ENCODE measurements at regions of chr15 and their contacts with region 1.

Region 1: DNA sequence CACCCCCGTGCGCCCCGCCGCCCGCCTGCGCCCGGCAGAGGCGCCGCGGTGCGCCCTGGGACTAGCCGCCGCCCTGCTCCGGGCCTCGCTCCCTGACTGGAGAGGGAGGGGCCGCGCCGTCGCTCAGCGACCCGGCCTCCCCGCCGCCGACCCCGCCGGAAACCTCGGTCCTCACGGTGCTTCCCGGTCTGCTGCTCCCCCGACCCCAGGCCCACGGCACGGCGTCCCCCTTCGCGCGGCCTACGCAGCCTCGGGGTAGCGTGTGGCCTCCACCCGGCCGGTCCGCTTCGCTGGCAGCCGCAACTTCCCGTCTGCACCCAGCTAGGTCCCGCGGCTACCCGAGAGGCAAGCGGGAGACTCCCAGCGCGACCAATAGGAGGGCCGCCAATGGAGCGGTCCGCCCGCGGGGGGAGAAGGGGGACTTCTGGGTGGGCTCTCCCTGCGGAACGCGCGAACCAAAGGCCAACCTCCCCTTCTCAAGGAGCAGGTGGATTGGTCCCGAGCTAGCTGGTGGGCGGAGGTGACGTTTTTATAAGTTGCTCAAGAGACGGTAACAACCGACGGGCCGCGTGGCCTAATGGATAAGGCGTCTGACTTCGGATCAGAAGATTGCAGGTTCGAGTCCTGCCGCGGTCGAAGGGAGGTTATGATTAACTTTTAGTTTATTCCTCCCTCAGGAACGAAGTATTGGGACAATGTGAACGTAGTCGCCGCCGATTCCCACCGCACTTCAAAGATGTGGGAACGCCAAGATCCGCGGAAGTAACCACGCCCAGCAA is at the start of gene POLG:
- DNase-seq: peak; percentile 98 to 99
- H3K4me3 ChIP-seq: peak within 1 kb of the TSS; percentile 79 to 93 (median 86)
- H3K27ac ChIP-seq: peak within 1 kb of the TSS; percentile 85
- H3K4me1 ChIP-seq: peaks cover 0 to 16% (median 3%) of the 10 kb centered on the region in 4 experiments; a peak in 4 of 7 replicates
- H3K27me3 ChIP-seq: no peaks in the 10 kb centered on the region; a peak in 1 of 7 replicates
- CTCF ChIP-seq: no peak
- EP300 ChIP-seq: peak in 1 of 2 experiments; percentile 100; a peak in 2 of 3 replicates
- POLR2A ChIP-seq: peak in 1 of 2 experiments; percentile 94; a peak in 2 of 3 replicates
- RAD21 ChIP-seq: no peak
- total RNA-seq, gene POLG: 52.3 and 53.4 TPM in 2 replicates

Region 2: GRCh38 chr15:89321521-89322410 is 12.9 kb before region 1 on chr15:
- CTCF ChIA-PET with region 1: interaction called, 54 read pairs
- POLR2A ChIA-PET with region 1: interaction called, 250 read pairs
- DNase-seq: no peak
- H3K4me3 ChIP-seq: no peak overlapping the region
- H3K27ac ChIP-seq: no peak overlapping the region
- H3K4me1 ChIP-seq: no peaks in the 10 kb centered on the region
- H3K27me3 ChIP-seq: no peaks in the 10 kb centered on the region
- CTCF ChIP-seq: peak in 2 of 3 experiments; percentile 26 to 44; a peak in 3 of 4 replicates
- EP300 ChIP-seq: no peak
- POLR2A ChIP-seq: no peak
- RAD21 ChIP-seq: peak in 1 of 2 experiments; percentile 23; a peak in 1 of 4 replicates

Region 3: DNA sequence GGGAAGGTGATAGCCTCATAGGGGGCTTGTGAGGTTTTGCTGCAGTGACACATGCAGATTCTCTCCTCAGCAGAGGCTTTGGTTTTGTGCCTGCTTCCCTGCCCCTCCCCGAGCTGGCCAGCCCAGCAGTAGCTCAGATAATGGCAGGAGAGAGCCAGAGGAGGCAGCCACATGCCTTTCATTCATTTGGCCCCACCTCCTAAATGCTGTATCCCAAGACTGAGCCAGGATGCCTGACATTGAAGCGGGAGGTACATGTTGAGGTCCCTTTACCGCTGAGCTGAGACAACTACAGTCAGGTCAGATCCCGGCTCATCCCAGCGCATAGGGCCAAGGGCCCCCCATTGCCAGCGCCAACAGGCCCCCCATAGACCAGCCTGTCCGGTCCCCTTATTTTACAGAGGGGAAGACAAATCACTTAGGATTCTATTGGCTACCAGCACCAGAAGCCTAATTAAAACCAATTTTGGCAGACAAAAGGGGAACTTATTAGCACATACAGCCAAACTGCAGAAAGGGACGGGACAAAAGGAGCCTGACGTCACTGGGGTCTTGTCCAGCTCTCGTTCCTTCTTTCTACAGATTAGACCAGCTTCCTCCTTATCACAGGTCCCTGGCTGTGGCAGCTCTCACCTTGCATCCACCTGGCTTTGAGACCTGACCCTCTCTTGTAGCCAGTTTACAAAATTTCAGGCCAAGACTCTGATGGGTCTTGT is 12.0 kb after region 1 on chr15:
- CTCF ChIA-PET with region 1: interaction called, 14 read pairs
- POLR2A ChIA-PET with region 1: interaction called, 8 read pairs
- DNase-seq: peak in 1 of 2 experiments; percentile 58
- H3K4me3 ChIP-seq: no peak overlapping the region
- H3K27ac ChIP-seq: no peak overlapping the region
- H3K4me1 ChIP-seq: peaks cover 0 to 10% (median 6%) of the 10 kb centered on the region in 4 experiments; a peak in 5 of 7 replicates
- H3K27me3 ChIP-seq: peaks cover 0 to 2% (median 0%) of the 10 kb centered on the region in 4 experiments; a peak in 1 of 7 replicates
- CTCF ChIP-seq: no peak
- EP300 ChIP-seq: no peak
- POLR2A ChIP-seq: no peak
- RAD21 ChIP-seq: no peak